ENCODE measurements at regions of chr3 and their contacts with region 1.

Region 1: GRCh38 chr3:51434746-51435327 is 43.8 kb downstream of the RBM15B start:
- DNase-seq: peak; percentile 62
- H3K4me3 ChIP-seq: no peak overlapping the region
- H3K27ac ChIP-seq: no peak overlapping the region
- H3K4me1 ChIP-seq: no peaks in the 10 kb centered on the region
- H3K27me3 ChIP-seq: no peaks in the 10 kb centered on the region
- CTCF ChIP-seq: peak; percentile 62 to 77
- POLR2A ChIP-seq: no peak

Region 2: GRCh38 chr3:51391075-51391567 is 43.7 kb before region 1 on chr3 and contains the start of gene RBM15B:
- CTCF ChIA-PET with region 1: interaction called, 13 read pairs
- POLR2A ChIA-PET with region 1: no interaction called
- dilution Hi-C with region 1: no loop called
- intact Hi-C with region 1: loop called (anchors 1 kb)
- DNase-seq: peak; percentile 96
- H3K4me3 ChIP-seq: peak within 1 kb of the TSS; percentile 29 to 77 (median 36)
- H3K27ac ChIP-seq: peak within 1 kb of the TSS; percentile 50
- H3K4me1 ChIP-seq: peaks cover 49% of the 10 kb centered on the region
- H3K27me3 ChIP-seq: no peaks in the 10 kb centered on the region
- CTCF ChIP-seq: peak in 1 of 2 donors; percentile 91
- POLR2A ChIP-seq: peak; percentile 75
- total RNA-seq, gene RBM15B: 38.3 and 39.1 TPM in 2 replicates

Region 3: DNA sequence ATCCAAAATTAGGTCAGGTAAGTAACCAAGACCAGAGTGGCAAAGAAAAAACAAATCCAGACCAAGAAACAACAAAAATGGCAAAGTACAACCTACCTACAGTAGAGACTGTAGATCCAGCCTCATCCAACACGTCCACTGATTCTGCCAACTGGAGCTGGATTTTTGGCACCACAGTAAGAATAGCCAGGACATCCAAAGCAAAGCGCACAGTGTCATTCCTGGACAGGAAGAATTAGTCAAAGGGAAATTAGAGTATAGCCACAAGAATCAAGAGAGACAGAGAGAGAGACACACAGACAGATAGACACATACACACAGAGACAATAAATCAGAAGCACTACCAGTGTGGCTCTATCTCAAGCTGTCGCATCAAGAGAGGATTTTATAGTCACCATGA is 12.6 kb before region 1 on chr3:
- CTCF ChIA-PET with region 1: interaction called, 15 read pairs
- POLR2A ChIA-PET with region 1: no interaction called
- dilution Hi-C with region 1: no loop called
- intact Hi-C with region 1: no loop called
- DNase-seq: no peak
- H3K4me3 ChIP-seq: no peak overlapping the region
- H3K27ac ChIP-seq: no peak overlapping the region
- H3K4me1 ChIP-seq: no peaks in the 10 kb centered on the region
- H3K27me3 ChIP-seq: no peaks in the 10 kb centered on the region
- CTCF ChIP-seq: no peak
- POLR2A ChIP-seq: no peak

Region 4: GRCh38 chr3:51445544-51446280 is 10.9 kb after region 1 on chr3:
- CTCF ChIA-PET with region 1: interaction called, 20 read pairs
- POLR2A ChIA-PET with region 1: no interaction called
- dilution Hi-C with region 1: no loop called
- intact Hi-C with region 1: no loop called
- DNase-seq: no peak
- H3K4me3 ChIP-seq: no peak overlapping the region
- H3K27ac ChIP-seq: no peak overlapping the region
- H3K4me1 ChIP-seq: no peaks in the 10 kb centered on the region
- H3K27me3 ChIP-seq: no peaks in the 10 kb centered on the region
- CTCF ChIP-seq: no peak
- POLR2A ChIP-seq: no peak

Measured in endothelial cell of umbilical vein (primary cell).